ENCODE measurements at regions of chr6 and their contacts with region 1.

Region 1: GRCh38 chr6:69835414-69836179 is 30.8 kb upstream of the COL19A1 start:
- DNase-seq: no peak
- H3K4me3 ChIP-seq: no peak overlapping the region
- H3K27ac ChIP-seq: no peak overlapping the region
- H3K4me1 ChIP-seq: no peaks in the 10 kb centered on the region
- H3K27me3 ChIP-seq: no peaks in the 10 kb centered on the region
- CTCF ChIP-seq: peak; percentile 23 to 73 (median 46)
- EP300 ChIP-seq: no peak
- POLR2A ChIP-seq: no peak

Region 2: DNA sequence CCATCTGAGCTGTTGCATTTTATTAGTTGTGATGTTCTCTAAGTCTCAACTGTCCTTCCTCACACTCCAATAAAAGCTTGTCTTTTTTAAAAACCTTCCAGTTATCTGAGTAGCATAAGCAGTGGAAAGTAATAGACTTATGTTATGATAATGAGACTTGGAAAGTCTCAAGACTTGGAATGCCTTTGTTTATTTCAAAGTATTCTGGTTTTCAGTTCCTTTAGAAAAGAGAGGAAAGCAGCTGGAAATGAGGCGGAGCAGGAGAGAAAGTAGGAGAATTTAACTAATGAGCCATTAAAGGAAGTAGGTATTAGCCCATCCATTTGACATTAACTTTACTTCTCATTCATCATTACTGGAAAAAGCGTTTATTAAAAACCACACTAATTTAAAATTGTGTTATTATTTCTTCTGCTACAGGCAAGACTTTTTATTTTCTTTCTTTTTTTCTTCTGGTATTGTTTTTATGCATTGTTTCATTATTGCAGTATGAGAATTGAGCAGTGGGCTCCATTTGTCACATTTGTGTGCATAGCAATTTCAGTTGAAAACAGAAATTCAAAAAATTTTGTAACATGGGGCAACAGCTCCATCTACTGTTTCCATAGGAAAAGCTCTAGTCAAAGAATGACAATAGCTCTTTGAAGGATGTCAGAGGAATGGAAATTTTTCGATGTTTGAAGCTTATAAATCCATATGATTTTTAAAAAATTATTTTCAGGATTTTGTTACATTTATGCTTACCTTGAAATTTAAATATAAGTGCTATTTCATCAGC is 272.4 kb after region 1 on chr6:
- intact Hi-C with region 1: loop called (anchors 5 kb)
- DNase-seq: no peak
- H3K4me3 ChIP-seq: no peak overlapping the region
- H3K27ac ChIP-seq: no peak overlapping the region
- H3K4me1 ChIP-seq: peaks cover 0 to 7% (median 3%) of the 10 kb centered on the region in 4 donors
- H3K27me3 ChIP-seq: no peaks in the 10 kb centered on the region
- CTCF ChIP-seq: peak in 2 of 4 experiments; percentile 34 to 60
- EP300 ChIP-seq: no peak
- POLR2A ChIP-seq: no peak

Measured in sigmoid colon (tissue), 7 donors.